A549 (cell line): ENCODE measurements at regions of chr5 and their contacts with region 1.

Region 1: DNA sequence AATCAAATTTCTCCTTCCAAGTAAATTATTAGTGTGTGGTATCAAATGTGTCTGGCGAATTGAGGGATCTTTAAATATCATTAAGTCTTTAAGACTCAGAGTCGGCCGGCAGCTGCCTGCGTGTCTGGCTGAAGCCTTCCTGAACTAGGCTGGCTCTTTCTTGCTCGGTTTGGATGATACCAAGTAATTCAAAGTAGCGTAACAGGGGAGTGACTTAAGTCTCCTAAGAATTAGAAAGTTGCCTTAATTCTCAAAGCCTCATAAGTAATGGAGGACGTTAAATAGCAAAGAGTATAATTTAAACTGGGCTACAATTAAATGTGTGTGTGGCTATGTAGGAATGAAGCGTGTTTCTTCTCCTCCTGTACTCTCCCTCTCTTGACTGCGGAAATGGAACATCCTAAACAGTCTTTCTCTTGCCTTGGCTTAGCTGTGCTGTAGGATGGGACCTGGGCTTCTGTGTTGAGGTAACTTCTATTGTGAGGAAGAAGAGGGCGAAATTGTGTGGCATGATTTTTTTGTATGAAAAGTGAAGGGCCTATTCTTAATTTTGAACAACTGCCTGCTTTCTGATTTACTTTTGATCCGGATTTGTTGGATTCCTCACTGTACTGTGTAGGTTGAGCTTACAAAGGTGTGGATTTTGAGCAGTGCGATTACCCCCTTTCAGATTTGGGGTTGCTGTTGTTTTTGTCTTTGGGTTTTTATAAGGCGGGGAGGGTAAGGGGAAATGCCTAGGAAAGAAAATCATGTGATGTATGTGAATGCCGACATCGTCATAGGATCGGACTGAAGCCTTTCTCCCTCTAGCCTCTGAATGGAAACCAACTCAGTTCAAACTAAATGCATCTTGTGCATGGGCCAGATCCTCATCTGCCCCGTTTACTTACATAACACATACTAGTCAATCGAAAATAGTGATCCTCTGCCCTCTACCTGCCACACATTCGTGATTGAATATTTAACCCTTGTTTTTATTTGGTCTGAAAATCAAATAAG is 29.9 kb downstream of the CPEB4 start:
- DNase-seq: peak; percentile 83 to 88
- ATAC-seq: peak; percentile 96 to 97
- H3K4me3 ChIP-seq: peak overlapping the region; percentile 60
- H3K27ac ChIP-seq: peak overlapping the region; percentile 84 to 86
- H3K4me1 ChIP-seq: peaks cover 46% of the 10 kb centered on the region
- CTCF ChIP-seq: no peak
- EP300 ChIP-seq: no peak
- POLR2A ChIP-seq: peak; percentile 55
- RAD21 ChIP-seq: no peak; a peak in 1 of 5 replicates

Region 2: DNA sequence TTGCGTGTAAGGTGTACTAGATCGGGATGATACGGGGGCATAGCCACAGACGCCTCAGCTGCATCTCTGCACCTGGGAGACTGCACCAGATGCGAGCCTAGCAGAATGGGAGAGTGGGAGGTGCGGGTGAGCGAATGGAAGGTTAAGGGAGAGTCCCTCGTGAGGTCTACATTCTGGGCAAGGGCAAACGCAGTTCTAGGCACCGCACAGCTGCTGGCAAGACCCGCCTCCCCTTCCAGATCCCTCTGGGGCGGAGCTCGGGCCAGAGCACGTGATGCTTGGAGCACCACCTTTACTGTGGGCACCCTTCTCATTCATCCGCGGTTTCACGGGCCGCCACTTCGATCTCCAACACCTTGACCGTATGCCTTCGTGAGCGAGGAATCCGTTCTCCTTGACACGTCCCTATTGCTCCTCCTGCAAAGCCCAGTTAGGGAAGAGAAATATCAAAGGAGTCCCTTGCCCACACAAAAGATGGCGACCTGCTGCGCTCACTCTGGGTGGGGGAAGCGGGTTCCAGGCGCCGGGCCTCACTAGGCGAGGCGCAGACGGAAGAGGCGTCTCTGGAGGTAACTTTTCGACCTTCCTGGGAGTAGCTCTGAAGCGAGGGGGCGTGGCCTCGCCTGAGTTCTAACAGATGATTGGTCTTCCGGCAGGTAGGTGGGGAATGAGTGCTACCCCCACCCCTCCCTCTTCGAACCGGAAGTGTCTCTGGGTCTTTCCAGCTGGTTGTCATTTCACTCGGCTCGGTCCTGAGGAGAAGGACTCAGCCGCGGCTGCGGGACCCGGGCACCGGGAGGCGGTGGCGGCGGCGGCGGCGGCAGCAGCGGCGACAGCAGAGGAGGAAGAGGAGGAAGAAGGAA is 30.2 kb before region 1 on chr5 and contains the start of gene CPEB4:
- CTCF ChIA-PET with region 1: no interaction called
- POLR2A ChIA-PET with region 1: interaction called, 11 read pairs
- DNase-seq: peak; percentile 99
- ATAC-seq: peak; percentile 97 to 98
- H3K4me3 ChIP-seq: peak within 1 kb of the TSS; percentile 83
- H3K27ac ChIP-seq: peak within 1 kb of the TSS; percentile 93 to 98
- H3K4me1 ChIP-seq: peaks cover 20% of the 10 kb centered on the region
- CTCF ChIP-seq: no peak
- EP300 ChIP-seq: no peak
- POLR2A ChIP-seq: peak; percentile 69
- RAD21 ChIP-seq: no peak; a peak in 1 of 5 replicates
- polyA plus RNA-seq, gene CPEB4: 49.1 and 50.0 TPM in 2 replicates

Region 3: DNA sequence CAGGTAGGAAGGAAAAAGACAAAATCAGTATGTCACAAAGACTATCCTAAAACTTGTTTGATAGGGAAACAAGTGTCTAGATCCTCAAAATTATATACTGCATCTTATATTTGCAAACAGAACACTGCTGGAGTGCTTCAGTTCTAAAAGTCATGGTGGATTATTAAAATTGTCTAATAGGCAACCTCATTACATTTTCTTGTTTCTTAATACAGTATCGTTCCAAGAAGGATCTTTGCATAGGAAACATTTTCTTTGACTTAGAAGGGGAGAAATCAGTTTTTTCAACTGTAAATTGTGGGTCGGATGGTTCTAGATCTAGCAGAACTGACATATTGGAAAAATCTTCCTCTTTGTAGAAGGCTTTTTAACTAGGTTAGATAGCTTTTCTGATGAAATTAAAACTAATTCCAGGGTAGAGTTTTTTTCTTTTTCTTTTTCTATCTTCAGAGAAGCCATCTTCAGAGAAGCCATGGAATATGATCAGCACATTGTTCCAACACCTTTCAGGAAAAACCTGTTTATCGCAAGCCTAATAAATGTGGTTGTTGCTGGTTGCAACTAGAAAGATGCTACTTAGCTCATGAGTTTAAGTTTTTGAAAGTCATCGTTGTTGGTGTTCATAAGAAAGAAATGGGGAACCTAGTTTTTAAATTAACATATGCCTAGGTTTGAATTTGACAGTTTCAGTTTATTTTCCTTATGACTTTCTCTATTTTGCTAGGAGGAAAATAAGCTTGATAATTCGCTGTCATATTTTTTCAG is 22.5 kb before region 1 on chr5:
- CTCF ChIA-PET with region 1: interaction called, 10 read pairs
- POLR2A ChIA-PET with region 1: no interaction called
- DNase-seq: no peak
- ATAC-seq: no peak
- H3K4me3 ChIP-seq: no peak overlapping the region
- H3K27ac ChIP-seq: no peak overlapping the region
- H3K4me1 ChIP-seq: peaks cover 32% of the 10 kb centered on the region
- CTCF ChIP-seq: no peak
- EP300 ChIP-seq: no peak
- POLR2A ChIP-seq: no peak
- RAD21 ChIP-seq: no peak

Region 4: GRCh38 chr5:173963867-173964441 is 45.9 kb after region 1 on chr5:
- CTCF ChIA-PET with region 1: no interaction called
- POLR2A ChIA-PET with region 1: interaction called, 12 read pairs
- DNase-seq: peak in 1 of 2 experiments; percentile 75
- ATAC-seq: peak; percentile 69 to 78
- H3K4me3 ChIP-seq: peak overlapping the region; percentile 23
- H3K27ac ChIP-seq: peak overlapping the region; percentile 72 to 81
- H3K4me1 ChIP-seq: peaks cover 30% of the 10 kb centered on the region
- CTCF ChIP-seq: no peak
- EP300 ChIP-seq: no peak
- POLR2A ChIP-seq: peak; percentile 26; the same call in 1 of the 2 replicates
- RAD21 ChIP-seq: no peak